CD14-positive monocyte (primary cell): ENCODE measurements at regions of chr12 and their contacts with region 1.

Region 1: DNA sequence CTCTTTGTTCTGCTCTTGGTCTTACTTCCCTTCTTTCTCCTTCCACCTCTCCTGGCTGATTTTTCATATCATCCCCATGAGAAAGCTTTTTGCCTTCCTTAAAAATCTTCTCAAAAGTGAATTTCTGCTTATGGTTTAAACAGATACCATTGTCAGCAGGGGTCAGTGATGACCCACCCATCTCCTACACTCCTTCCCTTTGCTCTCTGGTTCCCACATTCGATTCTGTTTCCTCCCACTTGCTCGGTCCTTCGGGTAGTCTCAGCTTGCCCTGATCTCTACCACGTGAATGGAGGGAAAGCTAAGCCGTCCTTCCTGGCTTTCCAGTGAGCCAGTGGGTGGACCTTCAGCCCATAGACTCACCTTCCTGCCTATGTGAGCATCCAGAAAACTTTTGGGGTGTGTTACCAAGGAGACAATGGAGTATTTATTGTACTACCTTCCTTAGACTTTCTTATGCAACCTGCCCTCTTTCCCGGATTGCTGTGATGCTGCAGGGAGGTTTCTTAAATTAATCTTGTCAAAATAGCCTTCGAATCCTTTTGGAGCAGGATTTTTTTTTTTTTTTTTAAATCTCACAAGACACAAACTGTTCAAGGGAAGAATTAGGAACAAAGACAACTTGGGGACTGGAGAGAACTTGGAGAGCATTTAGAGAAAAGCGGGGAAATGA is 306.3 kb downstream of the CACNA1C start:
- DNase-seq: no peak
- H3K4me3 ChIP-seq: peak overlapping the region in 1 of 3 experiments; percentile 30
- H3K4me3 Mint-ChIP-seq: peak overlapping the region in 1 of 2 donors; percentile 80
- H3K27ac ChIP-seq: peak overlapping the region; percentile 7 to 49
- H3K27ac Mint-ChIP-seq: peak overlapping the region; percentile 75 to 94 (median 84)
- H3K4me1 ChIP-seq: peaks cover 41 to 45% of the 10 kb centered on the region in 2 donors
- H3K4me1 Mint-ChIP-seq: peaks cover 50% of the 10 kb centered on the region
- H3K27me3 ChIP-seq: no peaks in the 10 kb centered on the region
- H3K27me3 Mint-ChIP-seq: peaks cover 2 to 7% (median 4%) of the 10 kb centered on the region in 3 donors
- CTCF ChIP-seq: no peak

Region 2: GRCh38 chr12:2215670-2216560 is 143.2 kb before region 1 on chr12:
- intact Hi-C with region 1: no loop called
- DNase-seq: no peak
- H3K4me3 ChIP-seq: no peak overlapping the region
- H3K4me3 Mint-ChIP-seq: no peak overlapping the region
- H3K27ac ChIP-seq: no peak overlapping the region
- H3K27ac Mint-ChIP-seq: peak overlapping the region in 1 of 7 donors; percentile 28
- H3K4me1 ChIP-seq: no peaks in the 10 kb centered on the region
- H3K4me1 Mint-ChIP-seq: peaks cover 2% of the 10 kb centered on the region
- H3K27me3 ChIP-seq: no peaks in the 10 kb centered on the region
- H3K27me3 Mint-ChIP-seq: peaks cover 3 to 5% (median 5%) of the 10 kb centered on the region in 3 donors
- CTCF ChIP-seq: no peak

Region 3: DNA sequence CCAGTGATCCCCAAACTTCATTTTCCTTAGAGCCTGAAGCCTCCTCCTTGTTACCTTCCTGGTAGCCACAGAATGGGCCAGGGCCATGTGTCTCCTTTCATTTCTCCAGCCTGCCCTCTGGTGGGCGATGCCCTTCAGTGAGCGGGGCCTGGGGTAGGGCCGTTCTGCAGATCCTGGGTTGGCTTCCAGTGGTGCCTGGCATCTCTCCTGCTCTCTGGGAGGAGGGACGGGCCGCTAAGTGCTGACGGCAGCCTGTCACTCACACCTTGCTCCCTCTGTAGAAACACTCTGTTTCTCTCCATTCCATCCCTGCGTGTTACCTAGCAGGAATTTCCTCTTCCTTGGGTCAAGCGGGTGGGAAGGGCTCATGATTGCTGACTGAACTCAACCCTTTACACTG is 74.3 kb before region 1 on chr12:
- intact Hi-C with region 1: loop called in 1 of 2 experiments (anchors 5 kb)
- DNase-seq: peak; percentile 43 to 61 (median 55)
- H3K4me3 ChIP-seq: peak overlapping the region in 1 of 3 experiments; percentile 51
- H3K4me3 Mint-ChIP-seq: peak overlapping the region; percentile 72 to 85
- H3K27ac ChIP-seq: peak overlapping the region in 1 of 2 donors; percentile 8
- H3K27ac Mint-ChIP-seq: peak overlapping the region; percentile 21 to 84 (median 77)
- H3K4me1 ChIP-seq: peaks cover 61 to 66% of the 10 kb centered on the region in 2 donors
- H3K4me1 Mint-ChIP-seq: peaks cover 67% of the 10 kb centered on the region
- H3K27me3 ChIP-seq: no peaks in the 10 kb centered on the region
- H3K27me3 Mint-ChIP-seq: peaks cover 0 to 1% (median 1%) of the 10 kb centered on the region in 3 donors
- CTCF ChIP-seq: peak; percentile 78

Region 4: DNA sequence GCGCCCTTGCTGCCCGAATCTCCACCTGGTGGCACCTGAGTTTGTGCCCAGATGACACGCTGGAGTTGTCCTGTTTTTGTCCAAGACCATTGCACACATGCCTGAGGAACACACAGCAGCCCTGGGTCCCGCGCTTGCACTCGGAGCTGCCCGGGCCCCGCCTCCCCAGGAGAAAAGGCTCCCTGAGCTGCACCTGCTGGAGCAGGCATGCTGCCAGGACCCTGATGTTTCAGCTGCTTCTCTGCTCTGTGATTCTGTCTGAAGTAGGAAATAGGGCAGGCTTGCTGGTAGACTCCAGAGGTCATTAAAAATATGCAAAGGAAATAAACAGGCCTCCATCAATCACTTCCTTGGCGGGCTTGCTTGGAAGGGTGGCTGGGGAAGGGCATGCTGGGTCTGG is 34.7 kb before region 1 on chr12:
- intact Hi-C with region 1: no loop called
- DNase-seq: no peak
- H3K4me3 ChIP-seq: no peak overlapping the region
- H3K4me3 Mint-ChIP-seq: no peak overlapping the region
- H3K27ac ChIP-seq: no peak overlapping the region
- H3K27ac Mint-ChIP-seq: peak overlapping the region in 1 of 7 donors; percentile 65
- H3K4me1 ChIP-seq: peaks cover 25% of the 10 kb centered on the region in 2 donors
- H3K4me1 Mint-ChIP-seq: peaks cover 32% of the 10 kb centered on the region
- H3K27me3 ChIP-seq: no peaks in the 10 kb centered on the region
- H3K27me3 Mint-ChIP-seq: peaks cover 3 to 5% (median 3%) of the 10 kb centered on the region in 3 donors
- CTCF ChIP-seq: no peak

Region 5: GRCh38 chr12:2341871-2342270 is 17.3 kb before region 1 on chr12:
- intact Hi-C with region 1: loop called in 1 of 2 experiments (anchors 2 kb)
- DNase-seq: peak; percentile 85 to 95 (median 91)
- H3K4me3 ChIP-seq: peak overlapping the region in 1 of 3 experiments; percentile 11
- H3K4me3 Mint-ChIP-seq: peak overlapping the region in 1 of 2 donors; percentile 36
- H3K27ac ChIP-seq: peak overlapping the region; percentile 66 to 90
- H3K27ac Mint-ChIP-seq: peak overlapping the region; percentile 92 to 98 (median 95)
- H3K4me1 ChIP-seq: peaks cover 87 to 94% of the 10 kb centered on the region in 2 donors
- H3K4me1 Mint-ChIP-seq: peaks cover 88% of the 10 kb centered on the region
- H3K27me3 ChIP-seq: no peaks in the 10 kb centered on the region
- H3K27me3 Mint-ChIP-seq: peaks cover 0 to 2% (median 0%) of the 10 kb centered on the region in 3 donors
- CTCF ChIP-seq: no peak

Region 6: GRCh38 chr12:3034067-3034750 is 675.1 kb after region 1 on chr12:
- intact Hi-C with region 1: no loop called
- DNase-seq: no peak
- H3K4me3 ChIP-seq: no peak overlapping the region
- H3K4me3 Mint-ChIP-seq: no peak overlapping the region
- H3K27ac ChIP-seq: no peak overlapping the region
- H3K27ac Mint-ChIP-seq: no peak overlapping the region
- H3K4me1 ChIP-seq: no peaks in the 10 kb centered on the region
- H3K4me1 Mint-ChIP-seq: no peaks in the 10 kb centered on the region
- H3K27me3 ChIP-seq: no peaks in the 10 kb centered on the region
- H3K27me3 Mint-ChIP-seq: peaks cover 0 to 3% (median 0%) of the 10 kb centered on the region in 3 donors
- CTCF ChIP-seq: peak; percentile 42